OCI-LY7 (cell line): ENCODE measurements at regions of chr3 and their contacts with region 1.

Region 1: GRCh38 chr3:180802837-180803236 is 109.6 kb upstream of the FXR1 start:
- DNase-seq: peak; percentile 22
- H3K4me3 ChIP-seq: no peak overlapping the region
- H3K27ac ChIP-seq: no peak overlapping the region
- H3K4me1 ChIP-seq: no peaks in the 10 kb centered on the region
- CTCF ChIP-seq: peak; percentile 76

Region 2: GRCh38 chr3:180870008-180870699 is 67.3 kb after region 1 on chr3:
- CTCF ChIA-PET with region 1: no interaction called
- POLR2A ChIA-PET with region 1: no interaction called
- intact Hi-C with region 1: no loop called
- DNase-seq: no peak
- H3K4me3 ChIP-seq: no peak overlapping the region
- H3K27ac ChIP-seq: no peak overlapping the region
- H3K4me1 ChIP-seq: no peaks in the 10 kb centered on the region
- CTCF ChIP-seq: no peak

Region 3: GRCh38 chr3:180881065-180881801 is 78.4 kb after region 1 on chr3:
- CTCF ChIA-PET with region 1: no interaction called
- POLR2A ChIA-PET with region 1: no interaction called
- intact Hi-C with region 1: no loop called
- DNase-seq: no peak
- H3K4me3 ChIP-seq: no peak overlapping the region
- H3K27ac ChIP-seq: no peak overlapping the region
- H3K4me1 ChIP-seq: no peaks in the 10 kb centered on the region
- CTCF ChIP-seq: no peak

Region 4: DNA sequence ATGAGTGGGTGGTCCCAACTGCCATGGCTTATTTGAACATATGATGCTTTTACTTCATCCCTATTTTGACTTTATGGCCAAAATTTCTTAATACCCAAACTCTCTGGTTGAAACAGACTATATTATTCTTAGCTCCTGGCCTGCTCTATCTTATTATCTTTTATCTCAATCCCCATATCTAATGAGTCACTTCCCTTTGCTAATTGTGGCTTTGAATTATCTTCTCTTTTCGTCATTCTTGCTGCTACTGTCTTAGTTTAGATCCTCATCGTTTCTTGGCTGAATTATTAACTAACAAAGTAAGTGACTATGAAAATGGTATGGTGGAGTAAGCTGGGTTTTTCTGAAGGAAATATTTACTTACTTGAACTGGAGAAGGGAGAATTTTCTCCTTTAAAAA is 214.9 kb after region 1 on chr3:
- CTCF ChIA-PET with region 1: no interaction called
- POLR2A ChIA-PET with region 1: no interaction called
- intact Hi-C with region 1: loop called (anchors 10 kb)
- DNase-seq: no peak
- H3K4me3 ChIP-seq: no peak overlapping the region
- H3K27ac ChIP-seq: no peak overlapping the region
- H3K4me1 ChIP-seq: no peaks in the 10 kb centered on the region
- CTCF ChIP-seq: no peak

Region 5: GRCh38 chr3:181278468-181279238 is 475.8 kb after region 1 on chr3:
- CTCF ChIA-PET with region 1: no interaction called
- POLR2A ChIA-PET with region 1: no interaction called
- intact Hi-C with region 1: loop called (anchors 2 kb)
- DNase-seq: peak; percentile 25
- H3K4me3 ChIP-seq: no peak overlapping the region
- H3K27ac ChIP-seq: no peak overlapping the region
- H3K4me1 ChIP-seq: no peaks in the 10 kb centered on the region
- CTCF ChIP-seq: peak; percentile 82